ENCODE measurements at regions of chr1 and their contacts with region 1.

Region 1: DNA sequence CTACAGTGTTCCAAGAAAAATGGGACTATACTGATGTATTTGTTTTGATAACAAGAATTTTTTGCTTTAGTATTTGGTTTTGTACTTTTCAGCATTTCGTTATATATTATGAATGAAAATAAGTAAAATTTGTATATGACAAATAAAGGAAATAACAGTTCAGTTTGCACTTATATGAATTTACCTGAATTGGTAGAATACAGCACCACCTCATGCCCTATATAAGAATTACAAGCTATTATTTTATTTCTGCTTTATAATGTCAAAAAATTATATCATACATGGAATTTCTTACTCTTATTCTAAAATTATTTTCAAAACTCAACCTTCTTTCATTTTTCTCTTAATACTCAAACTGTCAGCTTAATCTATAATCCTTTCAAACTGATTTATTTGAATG is 14.6 kb downstream of the EFCAB7 start:
- DNase-seq: no peak
- H3K4me3 ChIP-seq: no peak overlapping the region
- H3K27ac ChIP-seq: no peak overlapping the region
- H3K4me1 ChIP-seq: no peaks in the 10 kb centered on the region
- H3K27me3 ChIP-seq: no peaks in the 10 kb centered on the region
- CTCF ChIP-seq: peak in 2 of 3 experiments; percentile 57 to 59
- EP300 ChIP-seq: no peak
- POLR2A ChIP-seq: no peak

Region 2: GRCh38 chr1:63327417-63328139 is 210.4 kb before region 1 on chr1:
- intact Hi-C with region 1: loop called (anchors 10 kb)
- DNase-seq: no peak
- H3K4me3 ChIP-seq: peak overlapping the region in 3 of 4 donors; percentile 13 to 17 (median 15)
- H3K27ac ChIP-seq: peak overlapping the region in 2 of 4 donors; percentile 23 to 25
- H3K4me1 ChIP-seq: peaks cover 13 to 39% (median 29%) of the 10 kb centered on the region in 4 donors
- H3K27me3 ChIP-seq: peaks cover 31 to 100% (median 68%) of the 10 kb centered on the region in 4 donors
- CTCF ChIP-seq: peak; percentile 45 to 73 (median 58)
- EP300 ChIP-seq: no peak
- POLR2A ChIP-seq: no peak

Region 3: DNA sequence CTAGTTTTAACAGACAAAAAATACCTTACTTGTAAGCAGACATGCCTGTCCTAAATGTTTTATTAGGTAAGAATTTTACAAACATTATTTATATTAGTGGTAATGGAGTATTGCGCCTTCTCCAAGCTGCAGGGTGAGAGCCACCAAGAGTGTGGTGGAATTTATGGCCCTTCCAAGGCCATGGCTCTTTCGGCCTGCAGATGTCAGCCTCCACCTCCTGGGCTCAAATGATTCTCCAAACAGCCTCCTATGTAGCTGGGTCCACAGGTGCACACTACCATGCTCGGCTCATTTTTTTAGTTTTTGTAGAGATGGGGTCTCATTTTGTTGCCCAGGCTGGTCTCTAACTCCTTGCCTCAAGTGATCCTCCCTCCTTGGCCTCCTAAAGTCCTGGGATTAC is 71.2 kb before region 1 on chr1:
- intact Hi-C with region 1: loop called (anchors 5 kb)
- DNase-seq: no peak
- H3K4me3 ChIP-seq: no peak overlapping the region
- H3K27ac ChIP-seq: no peak overlapping the region
- H3K4me1 ChIP-seq: no peaks in the 10 kb centered on the region
- H3K27me3 ChIP-seq: no peaks in the 10 kb centered on the region
- CTCF ChIP-seq: peak; percentile 36 to 61 (median 43)
- EP300 ChIP-seq: no peak
- POLR2A ChIP-seq: no peak